ENCODE measurements at regions of chr5 and their contacts with region 1.

Region 1: GRCh38 chr5:120457839-120458507 is 6.1 kb upstream of the PRR16 start:
- DNase-seq: peak; percentile 74 to 80
- ATAC-seq: peak; percentile 57 to 90 (median 80)
- H3K4me3 ChIP-seq: peak overlapping the region in 9 of 10 donors; percentile 26 to 51 (median 44)
- H3K27ac ChIP-seq: peak overlapping the region in 5 of 10 donors; percentile 29 to 65 (median 45)
- H3K4me1 ChIP-seq: peaks cover 0 to 16% (median 6%) of the 10 kb centered on the region in 9 donors
- H3K27me3 ChIP-seq: peaks cover 0 to 2% (median 0%) of the 10 kb centered on the region in 7 donors
- CTCF ChIP-seq: peak; percentile 64 to 88 (median 78)

Region 2: DNA sequence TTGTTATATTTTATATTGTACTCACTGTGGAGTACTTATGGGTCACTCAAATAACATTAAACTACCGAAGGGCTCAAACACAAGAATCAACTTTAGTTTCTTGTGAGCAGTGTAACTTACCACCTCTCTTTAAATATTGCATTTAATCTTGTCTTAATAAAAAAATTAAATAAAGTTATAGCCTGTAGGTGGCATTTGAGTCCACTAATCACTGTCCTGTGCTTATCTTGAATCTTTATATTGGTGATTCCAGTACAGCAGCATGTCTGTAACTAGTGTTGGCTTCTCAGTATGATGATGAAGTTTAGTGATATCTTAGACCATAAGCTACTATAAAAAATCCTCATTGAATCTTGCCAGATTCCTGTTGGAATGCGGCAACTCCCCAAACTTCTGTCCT is 514.8 kb before region 1 on chr5:
- intact Hi-C with region 1: loop called in 6 of 10 experiments (anchors 2 to 10 kb)
- DNase-seq: no peak
- ATAC-seq: peak in 2 of 8 donors; percentile 49 to 55
- H3K4me3 ChIP-seq: no peak overlapping the region
- H3K27ac ChIP-seq: no peak overlapping the region
- H3K4me1 ChIP-seq: no peaks in the 10 kb centered on the region
- H3K27me3 ChIP-seq: no peaks in the 10 kb centered on the region
- CTCF ChIP-seq: peak in 8 of 9 donors; percentile 8 to 60 (median 38)

Region 3: GRCh38 chr5:120139039-120139438 is 318.9 kb before region 1 on chr5:
- intact Hi-C with region 1: loop called in 1 of 10 experiments (anchors 5 kb)
- DNase-seq: peak in 1 of 2 donors; percentile 15
- ATAC-seq: peak in 7 of 8 donors; percentile 61 to 88 (median 82)
- H3K4me3 ChIP-seq: no peak overlapping the region
- H3K27ac ChIP-seq: peak overlapping the region in 8 of 10 donors; percentile 53 to 86 (median 76)
- H3K4me1 ChIP-seq: peaks cover 0 to 29% (median 0%) of the 10 kb centered on the region in 9 donors
- H3K27me3 ChIP-seq: no peaks in the 10 kb centered on the region
- CTCF ChIP-seq: no peak